ENCODE measurements at regions of chr4 and their contacts with region 1.

Region 1: GRCh38 chr4:73662709-73663546 is 42.7 kb upstream of the RASSF6 start:
- DNase-seq: no peak
- ATAC-seq: peak; percentile 72
- H3K4me3 ChIP-seq: no peak overlapping the region
- H3K27ac ChIP-seq: no peak overlapping the region
- H3K4me1 ChIP-seq: no peaks in the 10 kb centered on the region
- H3K27me3 ChIP-seq: no peaks in the 10 kb centered on the region
- CTCF ChIP-seq: peak; percentile 18 to 73 (median 49)
- POLR2A ChIP-seq: no peak

Region 2: DNA sequence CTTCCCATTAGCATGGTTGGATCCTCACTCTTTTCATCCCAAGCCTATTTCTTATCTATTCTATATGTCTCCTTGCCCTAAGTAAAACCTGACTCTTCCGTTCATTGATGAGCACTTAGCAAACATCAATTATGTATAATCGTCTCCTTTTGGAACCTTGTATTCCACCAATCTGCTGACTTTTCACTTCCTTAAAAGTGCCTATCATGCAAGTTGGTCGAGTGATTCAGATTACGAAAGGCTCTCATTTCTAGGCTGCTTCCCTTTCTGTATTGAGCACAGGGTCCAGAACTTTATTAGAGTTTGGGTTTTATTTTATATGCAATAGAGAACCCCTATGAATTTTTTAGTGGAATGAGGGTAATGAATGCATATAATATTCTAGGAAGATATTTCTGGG is 286.0 kb before region 1 on chr4:
- intact Hi-C with region 1: no loop called
- DNase-seq: no peak
- ATAC-seq: no peak
- H3K4me3 ChIP-seq: no peak overlapping the region
- H3K27ac ChIP-seq: no peak overlapping the region
- H3K4me1 ChIP-seq: peaks cover 16% of the 10 kb centered on the region
- H3K27me3 ChIP-seq: no peaks in the 10 kb centered on the region
- CTCF ChIP-seq: no peak
- POLR2A ChIP-seq: no peak

Region 3: GRCh38 chr4:73487233-73487632 is 175.7 kb before region 1 on chr4:
- intact Hi-C with region 1: no loop called
- DNase-seq: no peak
- ATAC-seq: no peak
- H3K4me3 ChIP-seq: no peak overlapping the region
- H3K27ac ChIP-seq: no peak overlapping the region
- H3K4me1 ChIP-seq: peaks cover 11% of the 10 kb centered on the region
- H3K27me3 ChIP-seq: no peaks in the 10 kb centered on the region
- CTCF ChIP-seq: no peak
- POLR2A ChIP-seq: no peak

Region 4: GRCh38 chr4:73718375-73719373 is 55.7 kb after region 1 on chr4:
- intact Hi-C with region 1: no loop called
- DNase-seq: no peak
- ATAC-seq: no peak
- H3K4me3 ChIP-seq: no peak overlapping the region
- H3K27ac ChIP-seq: no peak overlapping the region
- H3K4me1 ChIP-seq: no peaks in the 10 kb centered on the region
- H3K27me3 ChIP-seq: no peaks in the 10 kb centered on the region
- CTCF ChIP-seq: no peak
- POLR2A ChIP-seq: no peak

Region 5: DNA sequence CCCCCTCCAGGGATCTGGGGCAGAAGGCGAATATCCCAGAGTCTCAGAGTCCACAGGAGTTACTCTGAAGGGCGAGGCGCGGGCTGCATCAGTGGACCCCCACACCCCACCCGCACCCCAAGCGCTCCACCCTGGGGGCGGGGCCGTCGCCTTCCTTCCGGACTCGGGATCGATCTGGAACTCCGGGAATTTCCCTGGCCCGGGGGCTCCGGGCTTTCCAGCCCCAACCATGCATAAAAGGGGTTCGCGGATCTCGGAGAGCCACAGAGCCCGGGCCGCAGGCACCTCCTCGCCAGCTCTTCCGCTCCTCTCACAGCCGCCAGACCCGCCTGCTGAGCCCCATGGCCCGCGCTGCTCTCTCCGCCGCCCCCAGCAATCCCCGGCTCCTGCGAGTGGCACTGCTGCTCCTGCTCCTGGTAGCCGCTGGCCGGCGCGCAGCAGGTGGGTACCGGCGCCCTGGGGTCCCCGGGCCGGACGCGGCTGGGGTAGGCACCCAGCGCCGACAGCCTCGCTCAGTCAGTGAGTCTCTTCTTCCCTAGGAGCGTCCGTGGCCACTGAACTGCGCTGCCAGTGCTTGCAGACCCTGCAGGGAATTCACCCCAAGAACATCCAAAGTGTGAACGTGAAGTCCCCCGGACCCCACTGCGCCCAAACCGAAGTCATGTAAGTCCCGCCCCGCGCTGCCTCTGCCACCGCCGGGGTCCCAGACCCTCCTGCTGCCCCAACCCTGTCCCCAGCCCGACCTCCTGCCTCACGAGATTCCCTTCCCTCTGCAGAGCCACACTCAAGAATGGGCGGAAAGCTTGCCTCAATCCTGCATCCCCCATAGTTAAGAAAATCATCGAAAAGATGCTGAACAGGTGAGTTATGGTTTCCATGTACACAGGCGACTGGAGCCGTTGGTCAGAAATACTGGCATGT is 206.5 kb after region 1 on chr4 and contains the start of gene CXCL1:
- intact Hi-C with region 1: loop called (anchors 10 kb)
- DNase-seq: peak; percentile 46 to 61 (median 48)
- ATAC-seq: peak; percentile 69
- H3K4me3 ChIP-seq: peak within 1 kb of the TSS; percentile 6 to 55
- H3K27ac ChIP-seq: peak within 1 kb of the TSS in 3 of 4 donors; percentile 25 to 85 (median 59)
- H3K4me1 ChIP-seq: peaks cover 5% of the 10 kb centered on the region
- H3K27me3 ChIP-seq: no peaks in the 10 kb centered on the region
- CTCF ChIP-seq: no peak
- POLR2A ChIP-seq: peak; percentile 25 to 83 (median 83)
- total RNA-seq, gene CXCL1: 17.1 to 52.7 TPM

Region 6: GRCh38 chr4:74133786-74134499 is 471.0 kb after region 1 on chr4:
- intact Hi-C with region 1: loop called (anchors 10 kb)
- DNase-seq: peak; percentile 82 to 88 (median 86)
- ATAC-seq: peak; percentile 99
- H3K4me3 ChIP-seq: no peak overlapping the region
- H3K27ac ChIP-seq: no peak overlapping the region
- H3K4me1 ChIP-seq: peaks cover 10% of the 10 kb centered on the region
- H3K27me3 ChIP-seq: no peaks in the 10 kb centered on the region
- CTCF ChIP-seq: peak in 6 of 7 experiments; percentile 72 to 95 (median 90)
- POLR2A ChIP-seq: no peak